Transverse colon (tissue), 4 donors: ENCODE measurements at regions of chr20 and their contacts with region 1.

Region 1: DNA sequence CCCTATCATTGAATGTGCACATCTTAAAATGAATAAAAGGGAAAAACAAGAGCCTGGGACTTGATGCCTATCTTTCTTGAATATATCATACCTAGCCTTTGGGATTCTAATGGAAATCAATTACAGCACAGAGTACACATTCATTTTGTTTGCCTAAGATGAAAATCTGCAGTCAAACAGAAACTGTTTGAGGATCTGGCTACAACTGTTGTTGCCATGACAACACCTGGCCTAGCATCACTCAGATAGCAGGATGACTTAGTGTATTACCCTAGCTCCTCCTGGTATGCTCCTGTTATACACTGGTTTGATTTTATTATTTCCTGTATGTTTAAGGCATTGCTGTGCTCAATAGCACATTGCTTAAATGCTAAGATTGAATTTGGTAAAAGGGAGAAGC is 71.5 kb upstream of the LAMP5 start:
- DNase-seq: no peak
- H3K4me3 ChIP-seq: no peak overlapping the region
- H3K27ac ChIP-seq: no peak overlapping the region
- H3K4me1 ChIP-seq: no peaks in the 10 kb centered on the region
- H3K27me3 ChIP-seq: no peaks in the 10 kb centered on the region
- CTCF ChIP-seq: no peak
- EP300 ChIP-seq: no peak
- POLR2A ChIP-seq: no peak

Region 2: DNA sequence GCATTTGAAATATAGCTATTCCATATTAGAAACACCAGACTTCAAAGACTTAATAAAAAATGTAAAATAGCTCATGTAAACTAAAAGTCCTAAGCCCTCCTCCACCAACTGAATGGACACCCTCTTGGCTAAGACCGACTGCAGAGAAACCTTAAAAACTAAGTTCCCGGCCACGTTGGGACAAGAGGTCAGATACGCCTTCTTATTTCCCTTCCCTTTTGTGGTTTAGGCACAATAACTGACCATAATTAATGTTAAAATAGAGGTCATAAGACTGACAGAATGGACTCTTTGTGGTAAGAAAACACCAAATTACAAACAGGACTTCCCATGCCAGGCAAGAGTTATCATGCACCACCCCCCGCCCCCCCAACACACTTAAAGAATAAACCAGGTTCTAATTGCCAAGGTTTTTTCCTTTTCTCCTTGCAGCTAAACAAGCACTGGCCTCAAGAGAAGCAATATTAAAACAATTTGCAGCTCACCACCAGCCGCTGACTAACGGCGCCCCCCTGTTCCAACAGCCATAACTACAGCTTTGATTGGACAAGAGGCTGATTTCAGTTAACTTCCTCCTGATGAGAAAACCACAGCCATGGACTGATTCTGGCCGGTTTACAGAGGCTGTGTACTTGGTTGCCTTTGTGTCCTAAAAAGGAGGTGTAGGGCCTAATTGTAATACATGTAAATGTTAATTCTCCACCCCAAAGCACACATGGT is 60.8 kb after region 1 on chr20:
- in situ Hi-C with region 1: loop called in 1 of 4 experiments (anchors 10 kb)
- intact Hi-C with region 1: no loop called
- DNase-seq: no peak
- H3K4me3 ChIP-seq: no peak overlapping the region
- H3K27ac ChIP-seq: no peak overlapping the region
- H3K4me1 ChIP-seq: peaks cover 0 to 14% (median 4%) of the 10 kb centered on the region in 4 donors
- H3K27me3 ChIP-seq: peaks cover 42% of the 10 kb centered on the region
- CTCF ChIP-seq: no peak
- EP300 ChIP-seq: no peak
- POLR2A ChIP-seq: no peak